ENCODE measurements at regions of chr4 and their contacts with region 1.

Region 1: GRCh38 chr4:52606726-52607125 is 52.4 kb downstream of the USP46 start:
- DNase-seq: peak; percentile 63
- ATAC-seq: peak; percentile 96
- H3K4me3 ChIP-seq: no peak overlapping the region
- H3K27ac ChIP-seq: no peak overlapping the region
- H3K4me1 ChIP-seq: peaks cover 3% of the 10 kb centered on the region
- H3K27me3 ChIP-seq: no peaks in the 10 kb centered on the region
- CTCF ChIP-seq: no peak
- POLR2A ChIP-seq: no peak
- RAD21 ChIP-seq: no peak

Region 2: DNA sequence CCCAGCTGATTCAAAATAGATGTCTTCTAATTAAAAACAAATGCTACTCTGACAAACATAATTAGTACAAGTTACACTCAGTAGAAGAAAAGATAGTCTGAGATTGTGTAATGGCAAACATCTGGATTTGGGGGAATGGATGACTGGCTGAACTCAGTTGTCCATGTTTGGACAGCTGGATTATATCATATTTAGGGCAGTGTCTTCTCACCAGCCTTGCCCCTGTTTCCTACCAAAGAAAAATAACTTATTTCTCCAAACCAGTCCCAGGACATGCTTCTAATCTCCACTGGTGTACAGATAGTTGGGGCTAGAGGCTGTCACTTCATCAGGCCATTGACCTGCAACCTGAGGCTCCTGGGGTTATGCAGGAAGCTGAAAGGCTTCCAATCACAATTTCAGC is 184.9 kb before region 1 on chr4:
- CTCF ChIA-PET with region 1: no interaction called
- POLR2A ChIA-PET with region 1: no interaction called
- dilution Hi-C with region 1: no loop called
- in situ Hi-C with region 1: no loop called
- intact Hi-C with region 1: no loop called
- DNase-seq: no peak
- ATAC-seq: no peak
- H3K4me3 ChIP-seq: no peak overlapping the region
- H3K27ac ChIP-seq: no peak overlapping the region
- H3K4me1 ChIP-seq: no peaks in the 10 kb centered on the region
- H3K27me3 ChIP-seq: no peaks in the 10 kb centered on the region
- CTCF ChIP-seq: no peak
- POLR2A ChIP-seq: no peak
- RAD21 ChIP-seq: no peak

Region 3: GRCh38 chr4:52643785-52644244 is 37.1 kb after region 1 on chr4:
- CTCF ChIA-PET with region 1: no interaction called
- POLR2A ChIA-PET with region 1: no interaction called
- dilution Hi-C with region 1: no loop called
- in situ Hi-C with region 1: no loop called
- intact Hi-C with region 1: loop called (anchors 5 kb)
- DNase-seq: peak; percentile 78
- ATAC-seq: peak; percentile 50
- H3K4me3 ChIP-seq: no peak overlapping the region
- H3K27ac ChIP-seq: no peak overlapping the region
- H3K4me1 ChIP-seq: peaks cover 12% of the 10 kb centered on the region
- H3K27me3 ChIP-seq: no peaks in the 10 kb centered on the region
- CTCF ChIP-seq: no peak
- POLR2A ChIP-seq: no peak
- RAD21 ChIP-seq: no peak

Region 4: GRCh38 chr4:52721968-52722815 is 115.5 kb after region 1 on chr4:
- CTCF ChIA-PET with region 1: no interaction called
- POLR2A ChIA-PET with region 1: no interaction called
- dilution Hi-C with region 1: no loop called
- in situ Hi-C with region 1: no loop called
- intact Hi-C with region 1: no loop called
- DNase-seq: peak; percentile 97
- ATAC-seq: peak; percentile 97
- H3K4me3 ChIP-seq: peak overlapping the region; percentile 79
- H3K27ac ChIP-seq: peak overlapping the region; percentile 98
- H3K4me1 ChIP-seq: no peaks in the 10 kb centered on the region
- H3K27me3 ChIP-seq: no peaks in the 10 kb centered on the region
- CTCF ChIP-seq: no peak
- POLR2A ChIP-seq: peak; percentile 65; the same call in 1 of the 2 replicates
- RAD21 ChIP-seq: no peak